ENCODE measurements at regions of chr13 and their contacts with region 1.

Region 1: GRCh38 chr13:33707449-33707848 is 110.5 kb upstream of the RFC3 start:
- DNase-seq: no peak
- CTCF ChIP-seq: no peak

Region 2: GRCh38 chr13:33717775-33718174 is 10.3 kb after region 1 on chr13:
- CTCF ChIA-PET with region 1: interaction called, 10 read pairs
- POLR2A ChIA-PET with region 1: no interaction called
- DNase-seq: no peak
- CTCF ChIP-seq: no peak

Region 3: GRCh38 chr13:34750078-34750931 is 1042.9 kb after region 1 on chr13:
- CTCF ChIA-PET with region 1: no interaction called
- POLR2A ChIA-PET with region 1: no interaction called
- DNase-seq: peak; percentile 13
- CTCF ChIP-seq: no peak